Left cardiac atrium (tissue), 4 donors: ENCODE measurements at regions of chr3 and their contacts with region 1.

Region 1: DNA sequence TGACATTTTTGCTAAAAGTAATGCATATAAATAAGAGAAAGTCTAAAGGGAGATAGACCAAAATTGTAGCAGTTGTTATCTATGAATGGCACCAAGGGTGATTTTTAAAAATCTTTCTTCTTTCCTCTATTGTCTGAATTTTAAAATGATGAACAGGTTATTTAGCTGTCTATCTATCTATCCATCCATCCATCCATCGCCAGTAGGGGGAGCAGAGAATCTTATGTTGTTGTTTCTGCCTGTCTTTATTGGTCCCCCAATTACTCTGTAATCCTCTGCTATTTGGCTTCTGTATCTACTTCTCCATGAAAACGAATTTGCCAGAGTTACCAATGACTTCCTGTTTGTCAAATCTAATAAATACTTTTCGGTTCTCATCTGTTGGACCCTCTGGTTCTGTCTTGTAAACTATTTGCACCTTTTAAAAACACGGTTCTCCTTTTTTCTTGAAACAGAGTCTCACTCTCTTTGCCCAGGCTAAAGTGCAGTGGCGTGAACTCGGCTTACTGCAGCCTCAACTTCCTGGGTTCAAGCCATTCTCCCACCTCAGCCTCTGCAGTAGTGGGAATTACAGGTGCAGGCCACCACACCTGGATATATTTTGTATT is 86.0 kb downstream of the ECT2 start:
- DNase-seq: peak; percentile 28
- ATAC-seq: peak in 1 of 2 donors; percentile 55

Region 2: DNA sequence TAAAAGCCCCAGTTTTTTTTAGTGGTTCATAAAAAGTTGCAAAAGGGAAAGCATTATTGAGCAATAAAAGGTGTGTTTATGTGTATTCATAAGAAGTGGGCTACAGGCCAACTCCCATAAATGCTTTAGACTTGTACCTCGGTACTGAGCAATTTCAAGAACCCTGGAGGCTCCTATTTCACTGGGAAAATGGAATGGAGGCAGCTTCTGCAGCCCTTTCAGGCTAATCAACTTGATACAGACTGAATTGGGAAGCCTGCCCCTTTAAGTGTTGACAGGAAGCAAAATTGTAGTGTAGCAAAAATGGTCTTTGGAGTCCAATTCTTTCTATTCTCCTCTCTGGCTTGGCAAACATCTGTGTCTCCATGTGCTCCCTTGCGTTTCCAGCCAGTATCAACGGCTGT is 32.9 kb after region 1 on chr3:
- intact Hi-C with region 1: loop called in 1 of 2 experiments (anchors 2 kb)
- DNase-seq: no peak
- ATAC-seq: peak; percentile 46 to 47

Region 3: DNA sequence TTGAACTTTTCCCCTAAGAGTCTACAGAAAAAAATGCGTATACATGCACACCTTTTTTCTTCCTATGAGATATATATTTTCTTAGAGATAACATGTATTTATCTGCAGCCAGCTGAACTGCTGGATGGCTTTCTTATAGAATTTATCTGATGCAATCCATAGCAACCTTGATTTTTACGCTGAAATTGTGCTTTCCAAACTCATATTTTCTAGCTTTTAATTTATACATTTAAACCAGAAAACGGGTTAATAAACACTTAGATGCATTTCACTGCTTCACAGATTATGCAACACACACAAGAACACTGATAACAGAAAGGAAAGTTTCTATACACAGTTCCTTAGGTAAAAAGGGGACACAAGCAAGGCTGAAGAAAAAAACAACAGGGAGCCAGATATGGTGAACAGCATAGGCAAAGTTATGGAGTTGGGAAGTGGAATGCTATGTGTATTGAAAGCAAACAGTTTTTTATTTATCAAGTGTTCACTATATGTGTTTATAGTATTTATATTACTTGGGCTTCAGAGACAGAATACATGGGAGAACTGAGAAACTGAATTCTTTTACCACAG is 155.0 kb after region 1 on chr3:
- intact Hi-C with region 1: loop called in 1 of 2 experiments (anchors 10 kb)
- DNase-seq: no peak
- ATAC-seq: no peak

Region 4: DNA sequence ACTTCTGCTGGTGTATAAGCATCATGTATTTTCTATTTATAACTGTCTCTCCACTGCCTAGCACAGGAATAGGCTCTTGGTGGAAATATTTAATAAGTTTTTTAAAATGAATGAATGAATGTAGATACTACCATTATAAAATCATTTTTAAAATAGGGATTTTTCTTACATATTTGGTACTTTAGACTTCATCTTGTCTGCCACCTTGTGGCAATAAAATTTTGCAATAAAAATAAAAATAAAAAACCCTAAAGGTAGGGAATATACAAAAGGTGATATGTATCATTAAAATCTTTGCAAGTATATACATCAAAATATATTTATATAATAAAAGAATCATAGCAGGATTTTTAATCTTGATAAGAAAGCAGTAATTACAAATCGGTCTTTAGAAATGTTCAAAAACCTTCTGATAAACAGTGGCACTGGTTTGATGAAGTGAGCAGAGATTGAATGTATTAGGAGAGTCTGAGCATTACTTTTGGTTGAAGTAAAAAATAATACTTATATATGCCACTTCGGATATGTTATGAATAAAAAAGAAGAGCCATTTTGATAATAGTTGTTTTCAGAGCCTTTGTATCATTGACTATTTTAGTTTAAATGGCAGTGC is 209.4 kb after region 1 on chr3:
- intact Hi-C with region 1: loop called in 1 of 2 experiments (anchors 5 kb)
- DNase-seq: no peak
- ATAC-seq: no peak

Region 5: DNA sequence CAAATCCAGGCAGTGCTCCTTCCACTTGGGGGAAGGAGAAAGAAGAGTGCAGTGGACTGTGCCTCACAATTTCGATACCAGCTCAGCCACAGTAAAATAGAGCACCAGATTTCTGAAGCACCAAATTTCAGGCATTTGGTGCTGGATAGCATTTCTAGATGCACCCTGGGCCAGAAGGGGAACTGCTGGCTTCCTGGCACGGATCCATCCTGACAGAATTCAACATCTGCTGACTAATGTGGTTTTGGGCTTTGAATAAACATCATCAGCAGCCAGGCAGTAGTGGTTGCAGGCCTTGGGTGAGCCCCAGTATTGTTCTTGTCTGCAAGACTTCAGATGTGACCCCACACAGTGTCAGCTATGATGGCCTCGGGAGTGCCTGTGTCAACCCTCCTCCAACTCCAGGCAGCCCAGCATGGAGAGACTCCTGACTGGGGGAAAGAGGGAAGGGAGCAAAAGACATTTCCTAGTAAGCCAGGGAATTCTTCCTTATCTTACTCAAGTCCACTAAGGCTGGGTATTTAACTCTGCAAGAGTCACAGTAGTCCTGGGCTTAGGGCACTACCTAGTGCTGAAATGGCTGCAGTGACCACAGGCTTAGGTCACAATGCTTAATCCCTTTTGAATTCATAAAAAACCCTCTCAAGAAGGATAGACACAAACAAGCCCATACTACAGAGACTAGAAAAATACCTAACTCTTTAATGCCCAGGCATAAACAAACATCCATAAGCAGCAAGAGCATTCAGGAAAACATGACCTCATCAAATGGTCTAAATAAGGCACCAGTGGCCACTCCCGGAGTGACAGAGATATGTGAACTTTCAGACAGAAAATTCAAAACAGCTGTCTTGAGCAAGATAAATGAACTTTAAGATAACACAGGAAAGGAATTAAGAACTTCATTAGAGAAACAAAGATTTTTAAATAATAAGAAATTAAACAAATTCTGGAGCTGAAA is 229.8 kb after region 1 on chr3:
- intact Hi-C with region 1: no loop called
- DNase-seq: peak; percentile 32
- ATAC-seq: peak in 1 of 2 donors; percentile 90